ENCODE measurements at regions of chr12 and their contacts with region 1.

Region 1: DNA sequence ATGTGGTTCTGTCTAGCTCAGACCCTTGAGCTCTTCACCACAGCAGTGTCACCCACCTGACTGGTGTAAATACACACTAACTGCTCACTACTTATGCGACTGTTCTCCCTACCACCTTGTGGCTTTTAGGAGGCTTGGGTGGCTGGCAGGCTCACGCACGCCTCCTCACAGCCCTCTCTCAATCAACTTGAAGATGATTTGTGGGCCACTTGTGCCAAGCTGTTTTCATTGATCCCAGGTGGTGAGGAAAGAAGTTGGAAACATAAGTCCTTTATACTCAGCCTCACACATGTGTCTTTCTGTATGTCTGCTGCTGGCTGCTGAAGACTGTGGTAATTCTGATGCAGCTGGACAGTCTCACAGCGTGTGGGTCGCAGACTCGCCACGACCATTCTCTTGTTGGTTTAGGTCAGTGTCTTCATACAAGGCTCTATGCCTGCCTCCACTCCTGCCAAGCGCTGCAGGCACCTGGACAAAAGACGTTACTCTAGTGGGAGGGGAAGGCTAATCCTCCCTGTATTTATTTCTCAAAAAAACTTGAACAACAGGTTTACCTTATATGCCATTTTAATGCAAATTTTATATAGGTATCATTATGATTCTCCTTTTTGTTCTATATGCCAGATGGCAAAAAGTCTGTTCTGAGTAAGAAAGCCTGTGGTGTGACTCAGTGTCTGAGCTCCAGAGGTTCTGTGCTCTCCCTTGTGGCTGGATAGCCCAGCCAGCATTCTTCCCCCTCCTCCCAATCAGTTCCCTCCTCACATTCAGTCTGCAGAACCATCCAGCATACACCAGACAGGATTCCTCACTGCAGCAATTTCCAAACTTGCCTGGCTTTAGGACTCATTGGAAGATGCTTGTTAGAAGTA is 115.6 kb downstream of the DIP2B start:
- DNase-seq: peak; percentile 88
- H3K4me3 ChIP-seq: no peak overlapping the region
- H3K27ac ChIP-seq: peak overlapping the region; percentile 76
- H3K4me1 ChIP-seq: peaks cover 65% of the 10 kb centered on the region
- H3K27me3 ChIP-seq: no peaks in the 10 kb centered on the region
- CTCF ChIP-seq: peak in 1 of 2 donors; percentile 38

Region 2: GRCh38 chr12:50375802-50376201 is 244.5 kb before region 1 on chr12:
- CTCF ChIA-PET with region 1: interaction called, 22 read pairs
- dilution Hi-C with region 1: no loop called
- in situ Hi-C with region 1: no loop called
- intact Hi-C with region 1: no loop called
- DNase-seq: no peak
- H3K4me3 ChIP-seq: no peak overlapping the region
- H3K27ac ChIP-seq: no peak overlapping the region
- H3K4me1 ChIP-seq: peaks cover 2% of the 10 kb centered on the region
- H3K27me3 ChIP-seq: no peaks in the 10 kb centered on the region
- CTCF ChIP-seq: no peak

Region 3: GRCh38 chr12:50533203-50533584 is 87.1 kb before region 1 on chr12:
- CTCF ChIA-PET with region 1: no interaction called
- dilution Hi-C with region 1: loop called (anchors 5 kb)
- in situ Hi-C with region 1: loop called in 1 of 2 experiments (anchors 5 kb)
- intact Hi-C with region 1: loop called (anchors 2 kb)
- DNase-seq: no peak
- H3K4me3 ChIP-seq: no peak overlapping the region
- H3K27ac ChIP-seq: peak overlapping the region; percentile 98
- H3K4me1 ChIP-seq: peaks cover 53% of the 10 kb centered on the region
- H3K27me3 ChIP-seq: no peaks in the 10 kb centered on the region
- CTCF ChIP-seq: no peak

Region 4: GRCh38 chr12:50542448-50542847 is 77.9 kb before region 1 on chr12:
- CTCF ChIA-PET with region 1: interaction called, 5 read pairs
- dilution Hi-C with region 1: loop called (anchors 5 kb)
- in situ Hi-C with region 1: no loop called
- intact Hi-C with region 1: loop called (anchors 2 kb)
- DNase-seq: peak; percentile 99
- H3K4me3 ChIP-seq: no peak overlapping the region
- H3K27ac ChIP-seq: peak overlapping the region; percentile 98
- H3K4me1 ChIP-seq: peaks cover 38% of the 10 kb centered on the region
- H3K27me3 ChIP-seq: no peaks in the 10 kb centered on the region
- CTCF ChIP-seq: no peak

Region 5: DNA sequence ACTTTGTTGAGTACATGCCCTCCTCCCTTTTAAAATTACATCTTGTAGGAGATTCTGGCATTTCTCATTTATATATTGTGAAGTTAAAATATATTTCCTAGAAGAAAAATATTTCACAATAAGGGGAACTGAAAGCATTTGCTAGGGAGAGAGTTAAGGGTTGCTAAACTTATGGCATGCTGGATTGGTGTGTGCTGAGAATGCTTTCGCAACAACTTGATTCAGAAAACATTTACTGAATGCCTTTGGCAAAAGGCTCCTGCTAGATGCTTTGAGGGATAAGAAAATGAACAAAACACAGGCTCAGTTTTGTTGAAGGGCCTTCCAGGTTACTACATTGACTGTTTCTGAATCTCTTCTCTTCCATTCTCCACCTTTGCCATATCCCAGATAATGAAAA is 48.1 kb before region 1 on chr12:
- CTCF ChIA-PET with region 1: no interaction called
- dilution Hi-C with region 1: no loop called
- in situ Hi-C with region 1: no loop called
- intact Hi-C with region 1: loop called (anchors 2 kb)
- DNase-seq: peak; percentile 78
- H3K4me3 ChIP-seq: no peak overlapping the region
- H3K27ac ChIP-seq: peak overlapping the region; percentile 26
- H3K4me1 ChIP-seq: peaks cover 35% of the 10 kb centered on the region
- H3K27me3 ChIP-seq: no peaks in the 10 kb centered on the region
- CTCF ChIP-seq: no peak

Region 6: GRCh38 chr12:50597200-50598195 is 22.8 kb before region 1 on chr12:
- CTCF ChIA-PET with region 1: no interaction called
- dilution Hi-C with region 1: no loop called
- in situ Hi-C with region 1: no loop called
- intact Hi-C with region 1: loop called (anchors 1 kb)
- DNase-seq: peak; percentile 83
- H3K4me3 ChIP-seq: no peak overlapping the region
- H3K27ac ChIP-seq: peak overlapping the region; percentile 62
- H3K4me1 ChIP-seq: peaks cover 13% of the 10 kb centered on the region
- H3K27me3 ChIP-seq: no peaks in the 10 kb centered on the region
- CTCF ChIP-seq: peak in 1 of 2 donors; percentile 19

Region 7: DNA sequence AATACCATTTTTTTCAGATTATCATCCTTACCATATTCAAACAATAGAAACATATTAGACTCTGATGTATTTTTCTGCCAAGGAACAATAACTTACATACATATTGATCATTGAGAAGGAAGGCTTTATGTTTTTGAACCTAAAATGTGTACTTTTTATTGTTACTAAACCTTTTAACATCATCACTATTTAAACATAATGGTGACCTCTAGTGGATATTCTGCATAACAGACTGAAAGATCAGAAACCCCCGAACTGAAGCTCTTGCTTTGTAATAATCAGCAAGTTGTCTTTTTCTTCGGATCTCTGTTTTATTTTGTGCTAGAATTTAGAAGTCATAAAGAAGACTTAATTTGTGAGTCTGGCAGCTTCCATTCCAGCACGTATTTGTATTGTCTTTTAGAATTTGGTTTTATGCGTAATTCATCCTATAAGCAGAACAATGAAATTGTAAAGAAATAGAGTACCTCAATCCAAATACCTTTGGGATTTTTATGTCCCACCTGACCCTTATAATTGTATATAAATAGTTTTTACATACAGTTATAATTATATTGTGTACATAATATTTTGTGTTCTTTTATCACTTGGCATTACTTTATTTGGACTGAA is 17.6 kb after region 1 on chr12:
- CTCF ChIA-PET with region 1: interaction called, 3 read pairs
- dilution Hi-C with region 1: no loop called
- in situ Hi-C with region 1: no loop called
- intact Hi-C with region 1: loop called (anchors 1 kb)
- DNase-seq: peak; percentile 45
- H3K4me3 ChIP-seq: no peak overlapping the region
- H3K27ac ChIP-seq: peak overlapping the region; percentile 6
- H3K4me1 ChIP-seq: peaks cover 35% of the 10 kb centered on the region
- H3K27me3 ChIP-seq: no peaks in the 10 kb centered on the region
- CTCF ChIP-seq: peak; percentile 59